ENCODE measurements at regions of chr5 and their contacts with region 1.

Region 1: DNA sequence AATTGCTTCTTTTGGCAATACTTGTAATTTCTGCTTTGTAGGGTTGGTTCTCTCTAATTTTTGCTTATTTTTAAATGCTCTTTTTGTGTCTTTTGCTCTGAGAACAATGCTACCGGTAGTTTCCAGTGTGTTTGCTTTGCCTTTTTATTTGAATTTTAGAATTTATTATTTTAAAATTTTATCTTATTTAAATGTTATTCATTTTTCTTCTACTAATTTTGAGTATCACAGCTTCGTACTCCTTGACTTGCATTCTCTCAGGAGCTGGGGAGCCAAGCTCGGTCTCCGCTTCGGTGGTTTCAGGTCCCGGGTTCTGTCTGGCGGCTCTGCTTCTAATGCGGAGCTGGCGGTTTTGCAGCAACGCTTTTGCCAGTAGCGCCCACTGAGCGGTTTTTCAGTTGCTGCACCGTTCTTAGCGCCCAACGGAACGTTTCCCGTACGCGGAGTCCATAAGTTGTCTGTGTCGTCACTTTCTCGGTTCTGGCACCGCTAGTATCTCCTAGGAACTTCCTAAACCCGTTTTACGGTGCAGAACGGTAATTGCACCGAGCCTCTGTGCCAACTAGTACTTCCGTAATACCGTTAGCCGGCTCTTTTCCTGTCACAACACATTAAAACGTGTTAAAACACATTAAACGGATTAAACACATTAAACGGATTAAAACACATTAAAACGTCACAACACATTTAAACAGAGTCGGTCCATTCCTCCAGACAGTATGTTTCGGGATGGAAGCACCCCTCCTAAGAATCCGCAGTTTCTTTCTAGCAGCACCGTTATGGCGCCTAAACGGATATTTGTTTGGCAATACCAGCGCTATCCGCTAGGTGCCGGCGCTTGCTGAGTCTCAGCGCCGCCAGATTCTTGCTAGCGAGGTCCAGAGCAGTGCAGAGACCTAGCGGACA is 45.6 kb downstream of the ANXA2R start:
- DNase-seq: peak; percentile 81
- ATAC-seq: peak; percentile 78
- H3K4me3 ChIP-seq: peak overlapping the region; percentile 54 to 77
- H3K27ac ChIP-seq: peak overlapping the region; percentile 28; the same call in 1 of the 2 replicates
- H3K4me1 ChIP-seq: peaks cover 9 to 35% of the 10 kb centered on the region in 2 experiments; a peak in 3 of 4 replicates
- H3K27me3 ChIP-seq: no peaks in the 10 kb centered on the region
- CTCF ChIP-seq: peak; percentile 76 to 83 (median 82)
- POLR2A ChIP-seq: no peak
- RAD21 ChIP-seq: peak; percentile 67

Region 2: DNA sequence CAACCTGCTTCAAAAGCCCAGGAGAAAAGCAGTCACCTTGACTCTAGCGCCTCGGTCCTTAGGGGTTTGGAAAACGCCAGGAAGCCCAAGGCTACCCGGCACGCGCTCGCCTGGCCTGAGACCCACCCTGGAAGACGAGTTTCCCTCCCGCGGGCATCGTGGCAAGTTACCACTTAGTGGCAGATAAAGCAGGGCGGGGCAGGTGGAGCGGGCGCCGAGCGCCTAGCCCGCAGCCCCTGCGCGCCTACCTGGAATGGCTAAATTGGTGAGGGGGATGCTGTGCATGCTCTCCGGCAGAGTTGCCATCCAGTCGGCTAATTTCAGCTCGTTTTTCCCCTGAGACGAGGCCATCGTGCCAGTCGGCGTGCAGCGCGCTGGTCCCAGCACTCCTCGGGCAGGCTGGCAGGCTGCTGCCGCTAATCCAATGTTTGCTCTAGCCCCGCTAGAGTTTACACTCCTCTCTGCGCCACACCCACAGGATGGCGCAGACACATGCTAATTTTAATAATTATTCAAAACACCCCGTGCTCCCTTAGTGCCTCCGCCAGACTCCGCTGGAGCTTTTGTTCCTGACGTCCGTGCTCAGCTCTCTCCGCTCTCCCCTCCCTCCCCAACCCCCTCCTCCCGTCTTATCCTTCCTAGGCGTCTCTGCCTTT is 1484.2 kb before region 1 on chr5 and contains the start of gene PLCXD3:
- CTCF ChIA-PET with region 1: no interaction called
- POLR2A ChIA-PET with region 1: no interaction called
- RAD21 ChIA-PET with region 1: no interaction called
- intact Hi-C with region 1: no loop called
- DNase-seq: no peak
- ATAC-seq: no peak
- H3K4me3 ChIP-seq: no peak within 1 kb of the TSS
- H3K27ac ChIP-seq: no peak within 1 kb of the TSS
- H3K4me1 ChIP-seq: no peaks in the 10 kb centered on the region
- H3K27me3 ChIP-seq: no peaks in the 10 kb centered on the region
- CTCF ChIP-seq: no peak
- POLR2A ChIP-seq: no peak
- RAD21 ChIP-seq: no peak
- total RNA-seq, gene PLCXD3: not detected

Region 3: DNA sequence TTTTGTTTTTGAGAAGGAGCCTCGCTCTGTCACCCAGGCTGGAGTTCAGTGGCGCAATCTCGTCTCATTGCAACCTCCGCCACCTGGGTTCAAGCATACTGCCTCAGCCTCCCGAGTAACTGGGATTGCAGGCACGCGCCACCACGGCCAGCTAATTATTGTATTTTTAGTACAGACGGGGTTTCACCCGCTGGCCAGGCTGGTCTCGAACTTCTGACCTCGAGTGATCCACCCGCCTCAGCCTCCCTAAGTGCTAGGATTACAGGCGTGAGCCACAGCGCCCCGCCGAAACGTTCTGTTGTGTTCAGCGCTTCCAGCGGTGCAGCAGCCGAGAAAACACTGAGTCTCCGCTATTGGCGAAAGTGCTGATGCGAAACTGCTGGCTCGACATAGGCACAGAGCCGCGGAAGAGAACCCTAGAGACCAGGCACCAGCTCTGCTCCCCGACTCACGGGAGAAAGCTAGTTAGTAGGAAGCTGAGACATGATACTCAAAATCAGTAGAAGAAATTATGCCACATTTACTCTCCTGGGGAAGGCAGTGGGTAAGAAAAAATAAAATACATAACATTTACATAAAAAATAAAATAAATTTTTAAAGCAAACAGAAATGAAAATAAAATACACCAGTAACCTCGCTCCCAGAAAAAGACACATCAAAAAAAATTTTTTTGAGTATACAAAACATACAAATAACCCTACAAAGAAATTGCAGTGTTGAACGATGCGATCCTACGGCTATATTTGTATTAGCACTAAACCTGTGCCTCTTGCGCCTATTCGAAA is 14.1 kb after region 1 on chr5:
- CTCF ChIA-PET with region 1: no interaction called
- POLR2A ChIA-PET with region 1: no interaction called
- RAD21 ChIA-PET with region 1: no interaction called
- intact Hi-C with region 1: loop called (anchors 2 kb)
- DNase-seq: peak; percentile 80
- ATAC-seq: peak; percentile 92
- H3K4me3 ChIP-seq: peak overlapping the region; percentile 27 to 43
- H3K27ac ChIP-seq: no peak overlapping the region
- H3K4me1 ChIP-seq: peaks cover 0 to 9% of the 10 kb centered on the region in 2 experiments; a peak in 1 of 4 replicates
- H3K27me3 ChIP-seq: no peaks in the 10 kb centered on the region
- CTCF ChIP-seq: no peak
- POLR2A ChIP-seq: no peak
- RAD21 ChIP-seq: 0 out of 2 replicates have a peak, but pooled peaks have one; percentile 5

Region 4: DNA sequence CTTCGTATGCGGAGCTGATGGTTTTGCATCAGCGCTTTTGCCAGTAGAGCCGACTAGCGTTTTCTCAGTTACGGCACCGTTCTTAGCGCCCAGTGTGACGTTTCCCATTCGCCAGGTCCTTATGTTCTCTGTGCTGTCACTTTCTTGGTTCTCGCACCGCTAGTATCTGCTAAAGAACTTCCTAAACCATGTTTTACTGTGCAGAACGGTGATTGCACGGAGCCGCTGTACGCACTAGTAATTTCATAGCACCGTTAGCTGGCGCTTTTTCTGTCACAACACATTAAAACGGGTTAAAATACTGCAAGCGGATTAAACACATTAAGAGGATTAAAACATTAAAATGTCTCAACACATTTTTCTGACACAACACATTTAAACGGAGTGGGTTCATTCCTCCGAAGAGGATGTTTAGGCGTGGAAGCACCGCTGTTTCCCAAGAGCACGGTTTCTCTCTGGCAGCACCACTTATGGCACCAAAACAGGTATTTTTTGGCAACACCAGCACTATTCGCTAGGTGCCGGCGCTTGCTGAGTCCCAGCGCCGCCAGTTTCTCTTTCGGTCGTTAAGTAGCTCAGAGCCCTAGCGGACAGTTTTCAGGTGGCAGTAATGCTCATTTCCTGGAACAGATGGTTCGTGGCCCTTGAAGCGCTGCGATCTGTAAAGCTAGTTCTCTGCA is 25.3 kb after region 1 on chr5:
- CTCF ChIA-PET with region 1: interaction called, 11 read pairs
- POLR2A ChIA-PET with region 1: interaction called, 9 read pairs
- RAD21 ChIA-PET with region 1: no interaction called
- intact Hi-C with region 1: loop called (anchors 1 kb)
- DNase-seq: peak; percentile 87
- ATAC-seq: peak; percentile 81
- H3K4me3 ChIP-seq: peak overlapping the region; percentile 67 to 68
- H3K27ac ChIP-seq: no peak overlapping the region
- H3K4me1 ChIP-seq: peaks cover 4 to 27% of the 10 kb centered on the region in 2 experiments; a peak in 3 of 4 replicates
- H3K27me3 ChIP-seq: no peaks in the 10 kb centered on the region
- CTCF ChIP-seq: peak; percentile 29 to 65 (median 55); a peak in 5 of 6 replicates
- POLR2A ChIP-seq: no peak
- RAD21 ChIP-seq: peak; percentile 19; the same call in 1 of the 2 replicates

Region 5: DNA sequence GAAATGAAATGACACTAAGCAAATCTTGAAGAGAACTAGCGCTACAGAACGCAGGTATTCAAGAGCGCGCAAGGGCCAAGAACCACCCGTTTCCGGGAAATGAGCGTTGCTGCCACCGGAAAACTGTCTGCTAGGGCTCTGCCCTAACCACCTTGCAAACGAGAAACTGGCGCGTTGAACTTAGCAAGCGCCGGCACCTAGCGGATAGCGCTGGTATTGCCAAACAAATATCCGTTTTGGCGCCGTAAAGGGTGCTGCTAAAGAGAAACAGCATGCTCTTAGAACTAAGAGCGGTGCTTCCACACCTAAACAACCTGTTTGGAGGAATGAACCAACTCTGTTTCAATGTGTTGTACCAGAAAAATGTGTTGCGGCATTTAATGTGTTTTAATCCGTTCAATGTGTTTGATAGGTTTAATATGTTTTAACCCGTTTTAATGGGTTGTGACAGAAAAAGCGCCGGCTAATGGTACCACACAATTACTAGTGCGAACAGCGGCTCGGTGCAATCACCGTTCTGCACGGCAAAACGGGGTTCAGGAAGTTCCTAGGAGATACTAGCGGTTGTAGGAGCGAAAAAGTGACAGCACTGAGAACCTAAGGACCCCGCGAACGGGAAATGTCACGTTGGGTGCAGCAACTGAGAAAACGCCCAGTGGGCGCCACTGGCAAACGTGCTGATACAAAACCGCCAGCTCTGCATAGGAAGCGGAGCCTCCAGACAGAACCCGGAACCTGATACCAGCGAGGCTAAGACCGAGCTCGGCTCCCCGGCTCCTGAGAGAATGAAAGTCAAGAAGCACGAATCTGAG is 46.0 kb after region 1 on chr5 and contains the start of gene ANXA2R:
- CTCF ChIA-PET with region 1: interaction called, 13 read pairs
- POLR2A ChIA-PET with region 1: no interaction called
- RAD21 ChIA-PET with region 1: no interaction called
- intact Hi-C with region 1: loop called (anchors 1 kb)
- DNase-seq: peak; percentile 92
- ATAC-seq: peak; percentile 59
- H3K4me3 ChIP-seq: peak within 1 kb of the TSS; percentile 58 to 65
- H3K27ac ChIP-seq: peak within 1 kb of the TSS; percentile 81
- H3K4me1 ChIP-seq: peaks cover 0 to 39% of the 10 kb centered on the region in 2 experiments; a peak in 3 of 4 replicates
- H3K27me3 ChIP-seq: no peaks in the 10 kb centered on the region
- CTCF ChIP-seq: peak; percentile 70 to 77 (median 76)
- POLR2A ChIP-seq: no peak
- RAD21 ChIP-seq: peak; percentile 77
- total RNA-seq, gene ANXA2R: 0.37 TPM

Region 6: DNA sequence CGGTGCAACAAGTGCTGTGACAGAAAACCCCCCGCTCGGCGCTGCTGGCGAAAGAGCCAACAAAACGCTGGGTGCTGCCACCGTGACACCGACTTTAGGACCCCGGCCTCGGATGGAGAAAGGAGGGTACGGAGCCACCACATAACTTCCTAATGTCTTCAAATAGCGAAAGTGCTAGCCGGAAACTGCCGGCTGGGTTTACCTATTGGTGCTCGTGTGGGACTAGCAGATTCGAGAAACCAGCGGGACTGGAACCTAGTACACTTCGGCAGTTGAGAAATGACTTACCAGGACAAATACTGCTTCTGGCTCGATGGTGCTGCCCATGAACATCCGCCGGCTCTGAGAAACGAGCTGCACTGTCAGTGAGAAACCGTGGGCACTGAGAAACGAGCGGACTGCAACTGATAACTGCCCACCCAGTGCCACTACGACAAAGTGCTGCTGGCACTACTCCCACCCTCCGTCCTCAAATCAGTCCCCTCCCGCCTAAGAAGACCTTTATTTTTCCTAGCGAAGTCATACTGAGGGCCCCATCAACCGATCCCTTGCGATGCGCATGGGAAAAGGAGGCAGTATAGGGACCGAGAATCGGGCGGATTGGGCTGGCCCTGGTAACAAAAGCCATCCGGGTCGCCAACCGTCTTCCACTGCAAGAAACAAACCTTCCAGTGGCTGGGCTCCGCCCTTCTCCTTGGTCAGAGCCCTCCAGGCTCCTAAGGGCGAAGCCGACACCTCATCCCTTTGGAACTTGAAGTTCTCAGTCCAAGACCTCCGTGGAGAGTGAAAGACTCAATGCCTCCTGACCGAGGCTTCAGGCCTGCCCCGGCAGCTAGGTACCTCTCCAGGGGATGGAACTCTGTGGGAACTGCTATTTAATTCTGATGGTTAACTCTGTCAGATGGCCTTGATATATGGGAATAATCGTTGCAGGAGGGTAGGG is 72.6 kb after region 1 on chr5:
- CTCF ChIA-PET with region 1: no interaction called
- POLR2A ChIA-PET with region 1: no interaction called
- RAD21 ChIA-PET with region 1: no interaction called
- intact Hi-C with region 1: loop called (anchors 2 kb)
- DNase-seq: peak; percentile 85
- ATAC-seq: peak; percentile 63
- H3K4me3 ChIP-seq: peak overlapping the region; percentile 76 to 77
- H3K27ac ChIP-seq: peak overlapping the region; percentile 93
- H3K4me1 ChIP-seq: peaks cover 12 to 24% of the 10 kb centered on the region in 2 experiments
- H3K27me3 ChIP-seq: no peaks in the 10 kb centered on the region
- CTCF ChIP-seq: no peak
- POLR2A ChIP-seq: peak; percentile 32
- RAD21 ChIP-seq: no peak

Region 7: DNA sequence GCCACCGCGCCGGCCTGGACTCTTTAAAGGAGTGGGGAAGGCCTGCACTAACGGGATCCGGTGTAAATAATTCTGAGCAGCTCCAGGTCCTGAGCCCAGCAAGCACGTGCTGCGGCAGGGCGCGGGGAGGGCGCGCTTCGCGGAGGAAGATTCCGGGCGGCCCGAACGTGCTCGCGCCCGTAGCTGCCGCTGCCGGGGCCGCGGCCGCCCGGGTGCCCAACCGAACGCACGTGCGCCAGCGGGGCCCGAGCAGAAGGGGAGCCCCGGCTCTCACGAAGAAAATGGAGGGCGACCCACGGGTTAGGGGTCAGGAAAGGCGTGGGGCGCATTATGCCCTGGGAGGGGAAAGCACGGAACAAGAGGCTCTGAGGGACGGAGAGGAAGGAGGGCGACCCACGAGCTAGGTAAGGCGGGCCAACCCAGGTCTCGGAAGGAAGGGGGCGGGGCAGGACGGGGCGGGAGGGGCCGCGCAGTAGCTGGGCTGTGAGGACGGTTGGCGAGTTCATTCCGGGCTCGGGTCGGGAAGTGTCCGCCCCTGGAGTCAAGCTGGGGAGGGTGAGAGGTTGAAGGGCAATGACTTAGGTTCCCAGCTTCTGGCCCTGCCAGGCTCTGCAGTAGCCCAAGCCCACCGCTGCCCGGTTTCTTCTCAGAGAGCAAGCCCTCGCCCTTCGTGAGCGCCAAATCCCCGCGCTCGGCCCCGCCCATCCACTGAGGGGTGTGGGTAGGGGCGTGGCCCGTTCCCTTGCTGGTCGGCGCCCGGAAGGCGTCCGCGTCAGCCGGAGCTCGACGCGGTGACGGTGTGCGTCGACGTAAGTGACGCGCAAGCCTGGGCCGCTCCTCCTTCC is 126.4 kb after region 1 on chr5 and contains the start of gene ZNF131:
- CTCF ChIA-PET with region 1: interaction called, 3 read pairs
- POLR2A ChIA-PET with region 1: no interaction called
- RAD21 ChIA-PET with region 1: no interaction called
- intact Hi-C with region 1: loop called (anchors 5 kb)
- DNase-seq: peak; percentile 93
- ATAC-seq: peak; percentile 93
- H3K4me3 ChIP-seq: peak within 1 kb of the TSS; percentile 93 to 96
- H3K27ac ChIP-seq: peak within 1 kb of the TSS; percentile 93
- H3K4me1 ChIP-seq: peaks cover 9 to 25% of the 10 kb centered on the region in 2 experiments
- H3K27me3 ChIP-seq: no peaks in the 10 kb centered on the region
- CTCF ChIP-seq: no peak
- POLR2A ChIP-seq: peak; percentile 84
- RAD21 ChIP-seq: no peak
- total RNA-seq, gene ZNF131: 34.1 TPM

Region 8: DNA sequence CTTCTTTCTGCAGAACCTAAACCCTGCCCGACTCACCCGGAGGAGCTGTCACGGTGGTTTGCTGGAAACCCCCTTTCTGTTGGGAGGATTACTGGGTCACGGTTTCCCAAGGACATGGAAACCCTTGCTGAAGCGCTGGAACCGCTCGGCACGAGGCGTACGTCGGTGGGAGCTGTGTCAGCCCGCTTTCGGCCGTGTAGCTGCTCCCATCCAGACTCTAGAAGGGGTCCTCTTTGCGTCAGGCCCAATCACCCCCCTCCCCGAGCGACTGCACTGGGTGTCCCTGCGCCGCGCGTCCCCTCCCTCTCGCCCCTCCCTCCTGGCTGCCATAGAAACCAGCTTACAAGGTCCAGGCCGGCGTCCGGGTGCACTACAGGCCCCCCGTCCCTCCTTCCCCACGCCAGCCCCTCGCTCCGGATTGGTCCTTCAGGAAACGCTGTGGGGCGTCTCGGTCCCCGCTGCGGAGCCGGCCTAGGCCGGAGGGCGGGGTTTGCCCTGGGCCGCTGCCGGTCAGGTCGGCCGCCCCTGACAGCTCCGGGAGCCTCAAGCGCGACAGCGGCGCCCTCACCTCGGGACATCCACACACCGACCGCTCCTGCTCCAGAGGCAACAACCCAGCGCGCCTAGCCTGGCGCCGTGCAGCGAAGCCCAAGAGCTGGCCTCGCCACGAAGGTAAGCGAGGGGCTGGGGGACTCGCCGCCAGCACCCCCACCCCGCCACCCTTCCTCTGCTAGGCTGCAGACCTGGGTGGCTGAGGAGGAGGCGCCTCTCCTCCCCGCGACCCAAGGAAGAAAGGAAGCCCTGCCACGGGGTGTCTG is 197.4 kb after region 1 on chr5 and contains the start of gene NIM1K:
- CTCF ChIA-PET with region 1: no interaction called
- POLR2A ChIA-PET with region 1: no interaction called
- RAD21 ChIA-PET with region 1: no interaction called
- intact Hi-C with region 1: no loop called
- DNase-seq: no peak
- ATAC-seq: no peak
- H3K4me3 ChIP-seq: no peak within 1 kb of the TSS
- H3K27ac ChIP-seq: no peak within 1 kb of the TSS
- H3K4me1 ChIP-seq: no peaks in the 10 kb centered on the region
- H3K27me3 ChIP-seq: no peaks in the 10 kb centered on the region
- CTCF ChIP-seq: no peak
- POLR2A ChIP-seq: no peak
- RAD21 ChIP-seq: no peak
- total RNA-seq, gene NIM1K: 0.44 TPM